Thyroid gland (tissue), 4 donors: ENCODE measurements at regions of chr11 and their contacts with region 1.

Region 1: DNA sequence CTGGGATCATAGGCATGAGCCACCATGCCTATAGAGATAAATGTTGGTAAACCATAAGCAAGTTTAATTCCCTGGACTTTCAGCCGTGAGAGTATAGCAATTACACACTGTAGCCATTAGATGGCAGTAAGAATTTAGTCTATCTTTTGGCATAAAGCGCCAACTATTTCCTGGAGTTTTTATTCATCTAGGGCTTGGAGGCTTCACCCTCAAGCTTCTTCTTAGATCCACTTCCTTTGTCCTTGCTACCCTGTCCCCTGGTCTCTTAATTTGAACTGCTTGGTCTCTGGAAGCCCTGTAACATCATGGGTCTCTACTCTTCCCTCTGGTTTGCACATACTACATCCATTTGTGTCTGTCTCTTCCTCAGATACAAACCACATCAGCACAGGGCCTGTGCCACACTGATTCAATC is 38.2 kb downstream of the OR10A6 start:
- DNase-seq: no peak
- H3K4me3 ChIP-seq: no peak overlapping the region
- H3K27ac ChIP-seq: no peak overlapping the region
- H3K4me1 ChIP-seq: no peaks in the 10 kb centered on the region
- H3K27me3 ChIP-seq: no peaks in the 10 kb centered on the region
- CTCF ChIP-seq: peak in 5 of 6 experiments; percentile 9 to 72 (median 34)
- POLR2A ChIP-seq: no peak

Region 2: GRCh38 chr11:7986768-7987559 is 94.1 kb after region 1 on chr11 and contains the start of gene EIF3F:
- intact Hi-C with region 1: loop called (anchors 5 kb)
- DNase-seq: peak; percentile 88 to 90
- H3K4me3 ChIP-seq: peak within 1 kb of the TSS; percentile 42 to 92 (median 85)
- H3K27ac ChIP-seq: peak within 1 kb of the TSS in 2 of 3 donors; percentile 58 to 61
- H3K4me1 ChIP-seq: peaks cover 16 to 23% of the 10 kb centered on the region in 2 donors
- H3K27me3 ChIP-seq: no peaks in the 10 kb centered on the region
- CTCF ChIP-seq: peak; percentile 62 to 92 (median 84)
- POLR2A ChIP-seq: peak in 1 of 2 donors; percentile 55
- total RNA-seq, gene EIF3F: 187 to 263 (median 231) TPM

Region 3: DNA sequence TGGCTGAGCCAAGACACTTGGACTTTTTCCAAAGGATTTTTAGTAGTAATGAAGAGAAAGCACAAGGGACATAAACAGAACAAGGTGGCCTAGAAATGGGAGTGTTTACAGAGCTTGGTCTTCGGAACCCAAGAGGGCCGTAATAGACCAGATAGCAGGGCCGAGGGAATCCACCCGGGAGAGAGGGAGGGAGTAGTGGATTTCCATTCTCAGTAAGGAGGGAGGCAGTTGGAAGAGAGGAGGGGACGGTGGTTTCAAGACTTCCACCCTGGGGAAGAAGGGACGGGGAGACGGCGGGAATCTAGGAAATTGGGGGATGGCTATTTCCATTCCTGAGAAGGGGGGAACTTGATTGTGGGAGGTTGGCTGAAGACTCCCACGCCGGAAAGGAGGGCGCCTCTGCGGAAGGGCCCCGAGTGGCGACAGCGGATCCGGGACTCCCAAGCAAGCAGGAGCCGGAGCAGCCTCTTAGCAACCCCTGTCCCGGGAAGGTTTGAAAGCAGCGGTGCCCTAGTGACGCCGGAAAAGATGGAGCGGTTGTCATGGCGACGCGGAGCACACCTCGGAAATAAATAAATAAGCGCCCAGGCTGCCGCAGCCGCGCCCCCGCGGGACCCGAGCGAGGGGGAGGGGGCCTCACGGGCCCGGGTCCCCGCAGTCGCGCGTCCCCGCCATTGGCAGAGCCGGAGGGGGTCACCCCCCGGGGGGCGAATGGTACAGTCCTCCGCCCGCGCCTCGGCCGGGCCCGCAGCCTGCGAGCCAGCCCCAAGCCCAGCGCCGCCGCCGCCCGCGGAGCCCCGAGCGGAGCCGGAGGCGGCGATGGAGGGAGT is 125.9 kb after region 1 on chr11:
- intact Hi-C with region 1: no loop called
- DNase-seq: peak; percentile 71
- H3K4me3 ChIP-seq: peak overlapping the region; percentile 27 to 44 (median 31)
- H3K27ac ChIP-seq: peak overlapping the region; percentile 18 to 68 (median 59)
- H3K4me1 ChIP-seq: peaks cover 7 to 12% of the 10 kb centered on the region in 2 donors
- H3K27me3 ChIP-seq: no peaks in the 10 kb centered on the region
- CTCF ChIP-seq: no peak
- POLR2A ChIP-seq: peak in 1 of 2 donors; percentile 15

Region 4: DNA sequence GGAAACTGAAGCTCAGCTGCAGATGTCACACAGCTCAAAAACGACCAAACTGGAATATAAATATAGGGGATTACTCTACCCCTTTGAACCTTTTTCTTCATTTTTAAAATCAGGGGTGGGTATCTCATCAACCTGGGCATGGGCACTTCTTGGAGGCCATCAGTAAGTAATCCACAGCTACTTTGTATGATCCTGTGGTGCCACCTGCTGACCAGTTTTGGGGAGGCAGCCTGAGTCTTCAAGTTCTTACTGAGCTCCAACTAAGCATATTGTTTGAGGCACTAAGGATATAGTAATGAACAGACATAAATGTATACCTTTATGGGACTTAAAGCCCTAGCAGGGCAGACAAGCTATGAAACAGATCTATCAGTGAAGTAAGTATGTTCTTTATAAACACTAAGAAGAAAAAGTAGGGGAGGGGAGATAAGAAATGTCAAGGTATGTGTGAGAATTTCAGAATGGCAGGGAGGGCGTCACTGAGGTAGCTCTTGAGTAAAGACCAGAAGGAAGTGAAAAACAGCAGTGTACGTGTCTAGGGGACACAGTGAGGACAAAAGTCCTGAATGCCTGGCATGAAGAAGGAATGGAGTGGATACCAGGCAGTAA is 206.5 kb after region 1 on chr11:
- intact Hi-C with region 1: loop called (anchors 10 kb)
- DNase-seq: peak; percentile 83 to 86
- H3K4me3 ChIP-seq: no peak overlapping the region
- H3K27ac ChIP-seq: no peak overlapping the region
- H3K4me1 ChIP-seq: no peaks in the 10 kb centered on the region
- H3K27me3 ChIP-seq: no peaks in the 10 kb centered on the region
- CTCF ChIP-seq: peak in 5 of 6 experiments; percentile 34 to 77 (median 76)
- POLR2A ChIP-seq: no peak